ENCODE measurements at regions of chr11 and their contacts with region 1.

Region 1: GRCh38 chr11:36684840-36685801 is 87.1 kb upstream of the RAG2 start:
- DNase-seq: no peak
- H3K4me3 ChIP-seq: no peak overlapping the region
- H3K27ac ChIP-seq: no peak overlapping the region
- H3K4me1 ChIP-seq: peaks cover 0 to 7% (median 2%) of the 10 kb centered on the region in 4 donors
- H3K27me3 ChIP-seq: no peaks in the 10 kb centered on the region
- CTCF ChIP-seq: no peak
- EP300 ChIP-seq: no peak
- POLR2A ChIP-seq: no peak

Region 2: GRCh38 chr11:36091256-36091811 is 593.8 kb before region 1 on chr11:
- in situ Hi-C with region 1: no loop called
- intact Hi-C with region 1: no loop called
- DNase-seq: no peak
- H3K4me3 ChIP-seq: no peak overlapping the region
- H3K27ac ChIP-seq: no peak overlapping the region
- H3K4me1 ChIP-seq: no peaks in the 10 kb centered on the region
- H3K27me3 ChIP-seq: no peaks in the 10 kb centered on the region
- CTCF ChIP-seq: no peak
- EP300 ChIP-seq: no peak
- POLR2A ChIP-seq: no peak

Region 3: GRCh38 chr11:36558571-36559413 is 126.3 kb before region 1 on chr11:
- in situ Hi-C with region 1: no loop called
- intact Hi-C with region 1: no loop called
- DNase-seq: no peak
- H3K4me3 ChIP-seq: no peak overlapping the region
- H3K27ac ChIP-seq: no peak overlapping the region
- H3K4me1 ChIP-seq: no peaks in the 10 kb centered on the region
- H3K27me3 ChIP-seq: no peaks in the 10 kb centered on the region
- CTCF ChIP-seq: no peak
- EP300 ChIP-seq: no peak
- POLR2A ChIP-seq: no peak

Region 4: GRCh38 chr11:38153985-38154384 is 1468.9 kb after region 1 on chr11:
- in situ Hi-C with region 1: no loop called
- intact Hi-C with region 1: loop called (anchors 5 kb)
- DNase-seq: no peak
- H3K4me3 ChIP-seq: no peak overlapping the region
- H3K27ac ChIP-seq: no peak overlapping the region
- H3K4me1 ChIP-seq: no peaks in the 10 kb centered on the region
- H3K27me3 ChIP-seq: no peaks in the 10 kb centered on the region
- CTCF ChIP-seq: no peak
- EP300 ChIP-seq: no peak
- POLR2A ChIP-seq: no peak